Naive thymus-derived CD4-positive, alpha-beta T cell (primary cell): ENCODE measurements at regions of chr1 and their contacts with region 1.

Region 1: DNA sequence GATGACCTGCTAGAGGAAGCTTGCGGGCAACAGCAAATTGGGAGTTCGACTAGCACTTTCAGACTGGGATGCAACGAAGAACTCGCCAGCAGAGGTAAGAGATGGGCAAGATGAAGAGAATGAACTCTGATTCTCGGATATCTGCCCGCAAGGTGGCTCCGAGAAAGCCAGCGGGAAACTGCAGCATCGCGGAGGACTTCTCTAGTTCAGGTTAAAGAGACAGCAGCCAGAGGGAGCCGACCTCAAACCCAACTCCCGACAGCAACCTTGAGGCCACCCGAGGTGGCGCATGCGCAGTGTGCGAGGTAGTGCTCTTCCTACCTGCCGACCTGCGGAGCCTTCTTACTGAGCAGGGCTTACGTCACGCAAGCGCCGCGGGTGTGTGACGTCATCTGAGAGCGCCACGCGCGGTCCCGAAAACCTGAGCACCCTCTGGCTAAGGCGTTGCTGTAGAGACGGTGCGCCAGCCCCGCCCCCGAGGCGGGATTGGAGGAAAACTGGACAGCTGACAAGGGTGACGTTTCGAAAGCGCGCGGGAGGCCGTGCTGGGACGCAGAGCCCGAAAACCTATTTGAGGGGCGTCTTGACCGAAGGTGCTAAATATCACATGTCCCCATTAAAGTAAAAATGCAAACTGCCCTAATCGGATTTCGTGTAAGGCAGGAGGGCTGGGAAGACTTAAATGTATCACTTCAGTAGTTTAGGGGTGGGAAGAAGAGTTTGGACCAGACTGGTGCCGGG is 110.5 kb upstream of the SLC25A33 start:
- DNase-seq: peak; percentile 96 to 100 (median 99)
- ATAC-seq: peak; percentile 90
- H3K4me3 ChIP-seq: peak overlapping the region; percentile 80
- H3K4me3 Mint-ChIP-seq: peak overlapping the region; percentile 80 to 100 (median 96)
- H3K27ac ChIP-seq: peak overlapping the region; percentile 88
- H3K27ac Mint-ChIP-seq: peak overlapping the region; percentile 92 to 100 (median 98)
- H3K4me1 ChIP-seq: peaks cover 28 to 42% of the 10 kb centered on the region in 2 donors
- H3K4me1 Mint-ChIP-seq: peaks cover 34 to 64% (median 56%) of the 10 kb centered on the region in 7 donors
- H3K27me3 ChIP-seq: no peaks in the 10 kb centered on the region
- H3K27me3 Mint-ChIP-seq: peaks cover 0 to 21% (median 0%) of the 10 kb centered on the region in 5 donors

Region 2: DNA sequence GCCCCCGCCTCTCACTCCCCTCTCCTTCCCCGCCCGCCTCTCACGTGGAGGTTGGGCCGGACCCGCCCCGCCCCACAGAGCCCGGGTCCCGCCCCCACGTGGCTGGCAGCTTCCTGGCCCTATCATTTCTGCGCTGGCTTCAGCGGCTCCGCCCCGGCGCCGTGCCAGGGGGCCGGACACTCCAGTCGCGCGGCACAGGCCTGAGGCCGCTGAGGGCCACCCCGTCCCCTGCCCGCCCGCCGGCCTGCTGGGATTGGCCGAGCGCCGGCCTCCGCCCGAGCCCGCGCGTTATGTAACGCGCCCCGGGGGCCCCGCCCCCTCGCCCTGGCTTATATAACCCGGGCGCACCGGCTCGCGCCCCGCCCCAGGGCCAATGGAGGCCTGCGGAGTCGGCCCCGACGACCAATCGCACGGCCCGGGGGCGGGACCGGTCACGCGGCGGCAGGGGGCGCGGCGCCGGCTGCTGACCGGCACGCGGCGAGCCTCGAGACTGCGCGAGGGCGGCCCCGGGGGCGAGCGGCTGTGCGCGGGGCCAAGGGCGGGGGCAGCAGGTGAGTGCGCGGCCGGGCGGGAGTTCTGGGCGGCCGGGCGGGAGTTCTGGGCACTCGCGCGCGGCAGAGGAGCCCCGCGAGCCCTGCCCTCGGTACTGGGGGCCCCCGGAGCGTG is 1644.8 kb before region 1 on chr1 and contains the start of gene PER3:
- CTCF ChIA-PET with region 1: no interaction called
- POLR2A ChIA-PET with region 1: no interaction called
- intact Hi-C with region 1: loop called in 1 of 2 experiments (anchors 5 kb)
- DNase-seq: peak; percentile 84 to 97 (median 94)
- ATAC-seq: peak; percentile 93
- H3K4me3 ChIP-seq: peak within 1 kb of the TSS; percentile 58
- H3K4me3 Mint-ChIP-seq: peak within 1 kb of the TSS; percentile 67 to 85 (median 76)
- H3K27ac ChIP-seq: peak within 1 kb of the TSS; percentile 99
- H3K27ac Mint-ChIP-seq: peak within 1 kb of the TSS in 8 of 9 donors; percentile 63 to 91 (median 82)
- H3K4me1 ChIP-seq: peaks cover 8 to 17% of the 10 kb centered on the region in 2 donors
- H3K4me1 Mint-ChIP-seq: peaks cover 18 to 39% (median 28%) of the 10 kb centered on the region in 7 donors
- H3K27me3 ChIP-seq: no peaks in the 10 kb centered on the region
- H3K27me3 Mint-ChIP-seq: peaks cover 0 to 16% (median 0%) of the 10 kb centered on the region in 5 donors
- total RNA-seq, gene PER3: 2.2 to 10.4 (median 5.1) TPM

Region 3: GRCh38 chr1:9234223-9235095 is 194.3 kb before region 1 on chr1 and contains the start of gene H6PD:
- CTCF ChIA-PET with region 1: no interaction called
- POLR2A ChIA-PET with region 1: interaction called, 3 read pairs
- intact Hi-C with region 1: loop called in 1 of 2 experiments (anchors 2 kb)
- DNase-seq: peak; percentile 60 to 88 (median 74)
- ATAC-seq: peak; percentile 88
- H3K4me3 ChIP-seq: peak within 1 kb of the TSS; percentile 74
- H3K4me3 Mint-ChIP-seq: peak within 1 kb of the TSS; percentile 83 to 97 (median 96)
- H3K27ac ChIP-seq: peak within 1 kb of the TSS; percentile 86
- H3K27ac Mint-ChIP-seq: peak within 1 kb of the TSS; percentile 91 to 99 (median 98)
- H3K4me1 ChIP-seq: peaks cover 14 to 23% of the 10 kb centered on the region in 2 donors
- H3K4me1 Mint-ChIP-seq: peaks cover 19 to 44% (median 36%) of the 10 kb centered on the region in 7 donors
- H3K27me3 ChIP-seq: no peaks in the 10 kb centered on the region
- H3K27me3 Mint-ChIP-seq: no peaks in the 10 kb centered on the region
- total RNA-seq, gene H6PD: 18.6 to 27.6 (median 19.8) TPM

Region 4: GRCh38 chr1:9292361-9293240 is 136.2 kb before region 1 on chr1 and contains the start of gene SPSB1:
- CTCF ChIA-PET with region 1: no interaction called
- POLR2A ChIA-PET with region 1: interaction called, 4 read pairs
- intact Hi-C with region 1: loop called (anchors 1 kb)
- DNase-seq: peak; percentile 30 to 66 (median 56)
- ATAC-seq: peak; percentile 81
- H3K4me3 ChIP-seq: peak within 1 kb of the TSS; percentile 55
- H3K4me3 Mint-ChIP-seq: peak within 1 kb of the TSS; percentile 34 to 86 (median 66)
- H3K27ac ChIP-seq: peak within 1 kb of the TSS; percentile 27
- H3K27ac Mint-ChIP-seq: peak within 1 kb of the TSS in 8 of 9 donors; percentile 21 to 81 (median 52)
- H3K4me1 ChIP-seq: peaks cover 6 to 19% of the 10 kb centered on the region in 2 donors
- H3K4me1 Mint-ChIP-seq: peaks cover 6 to 40% (median 32%) of the 10 kb centered on the region in 7 donors
- H3K27me3 ChIP-seq: no peaks in the 10 kb centered on the region
- H3K27me3 Mint-ChIP-seq: no peaks in the 10 kb centered on the region
- total RNA-seq, gene SPSB1: 1.8 to 10.3 (median 1.9) TPM

Region 5: GRCh38 chr1:9331558-9332346 is 97.0 kb before region 1 on chr1:
- CTCF ChIA-PET with region 1: no interaction called
- POLR2A ChIA-PET with region 1: no interaction called
- intact Hi-C with region 1: no loop called
- DNase-seq: no peak
- ATAC-seq: no peak
- H3K4me3 ChIP-seq: no peak overlapping the region
- H3K4me3 Mint-ChIP-seq: no peak overlapping the region
- H3K27ac ChIP-seq: no peak overlapping the region
- H3K27ac Mint-ChIP-seq: peak overlapping the region in 2 of 9 donors; percentile 63 to 64
- H3K4me1 ChIP-seq: no peaks in the 10 kb centered on the region
- H3K4me1 Mint-ChIP-seq: peaks cover 11 to 24% (median 14%) of the 10 kb centered on the region in 7 donors
- H3K27me3 ChIP-seq: no peaks in the 10 kb centered on the region
- H3K27me3 Mint-ChIP-seq: no peaks in the 10 kb centered on the region

Region 6: GRCh38 chr1:9399510-9400424 is 29.0 kb before region 1 on chr1:
- CTCF ChIA-PET with region 1: no interaction called
- POLR2A ChIA-PET with region 1: interaction called, 12 read pairs
- intact Hi-C with region 1: loop called in 1 of 2 experiments (anchors 1 kb)
- DNase-seq: no peak
- ATAC-seq: no peak
- H3K4me3 ChIP-seq: no peak overlapping the region
- H3K4me3 Mint-ChIP-seq: peak overlapping the region in 7 of 10 donors; percentile 21 to 69 (median 40)
- H3K27ac ChIP-seq: no peak overlapping the region
- H3K27ac Mint-ChIP-seq: peak overlapping the region in 1 of 9 donors; percentile 53
- H3K4me1 ChIP-seq: peaks cover 0 to 15% of the 10 kb centered on the region in 2 donors
- H3K4me1 Mint-ChIP-seq: peaks cover 2 to 17% (median 14%) of the 10 kb centered on the region in 7 donors
- H3K27me3 ChIP-seq: no peaks in the 10 kb centered on the region
- H3K27me3 Mint-ChIP-seq: peaks cover 0 to 14% (median 0%) of the 10 kb centered on the region in 5 donors

Region 7: DNA sequence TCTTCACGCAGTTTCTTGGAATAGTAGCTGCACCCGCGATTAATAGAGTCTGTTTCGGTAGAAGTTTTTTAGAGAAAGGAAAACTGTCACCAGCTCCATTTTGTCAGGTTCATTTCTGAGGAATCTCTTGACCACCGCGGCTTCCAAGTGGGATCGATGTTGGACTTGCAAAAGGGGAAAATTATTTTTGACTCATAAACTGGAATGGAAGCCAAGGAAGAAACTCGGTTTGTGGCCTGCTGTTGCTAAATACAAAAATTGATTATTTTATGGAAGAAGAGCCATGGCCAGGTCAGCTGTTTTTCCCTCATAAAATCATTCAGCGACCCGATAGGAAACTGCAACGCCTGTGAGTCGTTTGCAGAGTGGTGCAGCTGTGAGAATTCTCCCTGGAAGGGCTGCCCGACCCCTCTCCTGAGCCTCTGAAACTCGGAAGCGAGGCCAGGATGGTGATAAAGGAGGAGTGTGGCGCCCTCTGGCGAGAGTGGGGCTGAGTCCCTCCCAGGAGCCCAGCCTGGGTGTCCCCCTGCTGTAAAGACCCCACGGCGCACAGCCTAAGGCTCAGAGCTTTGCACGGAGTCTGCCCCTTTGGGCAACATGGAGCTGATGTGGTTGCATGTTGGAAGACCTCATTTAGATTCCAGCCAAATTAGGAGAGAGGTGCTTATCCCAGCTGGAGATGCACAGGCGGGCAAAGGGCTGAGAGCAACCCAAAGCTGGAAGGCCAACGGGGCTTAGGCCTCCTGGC is 26.9 kb after region 1 on chr1:
- CTCF ChIA-PET with region 1: no interaction called
- POLR2A ChIA-PET with region 1: no interaction called
- intact Hi-C with region 1: loop called in 1 of 2 experiments (anchors 1 kb)
- DNase-seq: peak; percentile 26 to 70 (median 58)
- ATAC-seq: peak; percentile 76
- H3K4me3 ChIP-seq: no peak overlapping the region
- H3K4me3 Mint-ChIP-seq: no peak overlapping the region
- H3K27ac ChIP-seq: no peak overlapping the region
- H3K27ac Mint-ChIP-seq: peak overlapping the region in 1 of 9 donors; percentile 48
- H3K4me1 ChIP-seq: no peaks in the 10 kb centered on the region
- H3K4me1 Mint-ChIP-seq: no peaks in the 10 kb centered on the region
- H3K27me3 ChIP-seq: no peaks in the 10 kb centered on the region
- H3K27me3 Mint-ChIP-seq: peaks cover 0 to 22% (median 0%) of the 10 kb centered on the region in 5 donors

Region 8: GRCh38 chr1:9473032-9473792 is 44.4 kb after region 1 on chr1:
- CTCF ChIA-PET with region 1: no interaction called
- POLR2A ChIA-PET with region 1: no interaction called
- intact Hi-C with region 1: no loop called
- DNase-seq: no peak
- ATAC-seq: no peak
- H3K4me3 ChIP-seq: no peak overlapping the region
- H3K4me3 Mint-ChIP-seq: no peak overlapping the region
- H3K27ac ChIP-seq: no peak overlapping the region
- H3K27ac Mint-ChIP-seq: no peak overlapping the region
- H3K4me1 ChIP-seq: no peaks in the 10 kb centered on the region
- H3K4me1 Mint-ChIP-seq: no peaks in the 10 kb centered on the region
- H3K27me3 ChIP-seq: no peaks in the 10 kb centered on the region
- H3K27me3 Mint-ChIP-seq: peaks cover 3 to 22% (median 10%) of the 10 kb centered on the region in 5 donors

Region 9: DNA sequence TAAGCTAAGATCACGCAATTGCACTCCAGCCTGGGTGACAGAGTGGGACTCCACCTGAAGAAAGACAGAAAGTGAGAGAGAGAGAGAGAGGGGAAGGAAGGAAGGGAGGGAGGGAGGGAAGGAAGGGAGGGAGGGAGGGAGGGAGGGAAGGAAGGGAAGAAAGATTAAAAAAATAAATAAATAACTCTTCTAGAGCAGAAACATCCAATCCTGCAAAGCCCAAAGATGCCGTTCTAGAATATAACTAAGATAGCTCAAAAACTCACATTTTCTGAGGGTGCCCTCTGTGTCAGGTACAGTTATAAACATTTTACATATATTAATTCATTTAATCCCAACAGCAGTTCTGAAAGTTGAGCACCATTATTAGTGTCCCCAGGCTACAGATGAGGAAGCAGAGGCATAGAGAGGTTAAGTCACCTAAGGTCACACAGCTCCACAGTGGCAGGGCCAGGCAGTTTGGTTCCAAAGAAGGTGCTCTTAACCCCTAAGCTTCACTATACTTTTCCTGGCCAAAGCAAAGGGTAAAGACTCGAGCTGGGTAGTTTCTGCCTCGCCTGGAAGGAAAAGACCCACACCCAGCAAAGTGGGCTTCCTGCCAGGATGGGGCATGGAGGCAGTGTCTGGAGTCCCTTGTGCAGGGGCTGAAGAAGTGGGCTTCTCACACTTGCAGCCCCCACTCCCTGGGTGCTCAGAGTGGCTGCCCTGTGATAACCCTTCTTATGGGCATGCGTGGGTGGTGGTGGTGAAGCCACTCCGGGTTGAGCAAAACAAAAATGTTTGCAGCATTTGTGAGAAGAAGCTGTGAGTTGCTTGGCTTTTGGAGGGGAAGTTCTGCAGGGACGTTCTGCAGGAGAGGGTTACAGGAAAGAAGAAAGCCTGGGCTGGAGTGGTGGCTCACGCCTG is 214.8 kb after region 1 on chr1:
- CTCF ChIA-PET with region 1: no interaction called
- POLR2A ChIA-PET with region 1: no interaction called
- intact Hi-C with region 1: no loop called
- DNase-seq: peak in 3 of 9 donors; percentile 10 to 55 (median 33)
- ATAC-seq: peak; percentile 43
- H3K4me3 ChIP-seq: no peak overlapping the region
- H3K4me3 Mint-ChIP-seq: peak overlapping the region; percentile 56 to 86 (median 76)
- H3K27ac ChIP-seq: peak overlapping the region; percentile 55
- H3K27ac Mint-ChIP-seq: peak overlapping the region; percentile 80 to 94 (median 90)
- H3K4me1 ChIP-seq: peaks cover 18 to 66% of the 10 kb centered on the region in 2 donors
- H3K4me1 Mint-ChIP-seq: peaks cover 46 to 83% (median 76%) of the 10 kb centered on the region in 7 donors
- H3K27me3 ChIP-seq: no peaks in the 10 kb centered on the region
- H3K27me3 Mint-ChIP-seq: no peaks in the 10 kb centered on the region

Region 10: DNA sequence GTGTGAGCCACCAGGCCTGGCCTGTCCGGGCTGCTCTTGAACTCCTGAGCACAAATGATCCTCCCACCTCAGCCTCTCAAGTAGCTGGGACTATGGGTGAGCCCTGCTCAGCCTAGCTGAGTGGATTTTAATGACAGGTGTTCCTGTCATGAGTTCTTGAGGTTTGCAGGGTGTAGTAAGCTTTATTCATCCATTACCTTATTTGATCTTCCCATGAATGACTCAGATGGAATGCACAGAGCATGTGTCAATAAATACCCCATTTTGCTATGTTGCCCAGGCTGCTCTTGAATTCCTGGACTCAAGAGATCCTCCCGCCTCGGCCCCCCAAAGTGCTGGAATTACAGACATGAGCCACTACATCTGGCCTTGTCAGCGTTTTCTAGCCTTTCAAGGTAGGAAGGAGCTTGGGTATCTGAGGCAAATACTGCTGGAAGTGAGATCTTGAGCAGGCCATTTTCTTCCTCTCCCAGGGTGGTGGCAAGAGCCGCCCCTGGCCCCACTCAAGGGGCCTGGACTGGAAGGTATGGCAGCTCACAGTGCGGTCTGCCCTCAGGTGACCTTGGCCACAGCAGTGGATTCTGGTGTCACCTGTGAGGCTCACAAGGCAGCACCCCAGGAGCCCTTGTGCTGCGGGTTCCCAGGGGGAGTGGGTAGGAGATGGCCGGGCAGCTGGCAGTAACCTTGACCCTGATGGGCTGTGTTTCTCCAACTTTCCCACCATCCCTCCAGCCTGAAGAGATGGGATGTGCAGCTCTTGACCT is 242.8 kb after region 1 on chr1:
- CTCF ChIA-PET with region 1: no interaction called
- POLR2A ChIA-PET with region 1: no interaction called
- intact Hi-C with region 1: no loop called
- DNase-seq: no peak
- ATAC-seq: no peak
- H3K4me3 ChIP-seq: no peak overlapping the region
- H3K4me3 Mint-ChIP-seq: peak overlapping the region in 6 of 10 donors; percentile 29 to 48 (median 38)
- H3K27ac ChIP-seq: peak overlapping the region; percentile 34
- H3K27ac Mint-ChIP-seq: peak overlapping the region; percentile 2 to 87 (median 60)
- H3K4me1 ChIP-seq: peaks cover 28 to 34% of the 10 kb centered on the region in 2 donors
- H3K4me1 Mint-ChIP-seq: peaks cover 42 to 81% (median 71%) of the 10 kb centered on the region in 7 donors
- H3K27me3 ChIP-seq: no peaks in the 10 kb centered on the region
- H3K27me3 Mint-ChIP-seq: no peaks in the 10 kb centered on the region

Region 11: DNA sequence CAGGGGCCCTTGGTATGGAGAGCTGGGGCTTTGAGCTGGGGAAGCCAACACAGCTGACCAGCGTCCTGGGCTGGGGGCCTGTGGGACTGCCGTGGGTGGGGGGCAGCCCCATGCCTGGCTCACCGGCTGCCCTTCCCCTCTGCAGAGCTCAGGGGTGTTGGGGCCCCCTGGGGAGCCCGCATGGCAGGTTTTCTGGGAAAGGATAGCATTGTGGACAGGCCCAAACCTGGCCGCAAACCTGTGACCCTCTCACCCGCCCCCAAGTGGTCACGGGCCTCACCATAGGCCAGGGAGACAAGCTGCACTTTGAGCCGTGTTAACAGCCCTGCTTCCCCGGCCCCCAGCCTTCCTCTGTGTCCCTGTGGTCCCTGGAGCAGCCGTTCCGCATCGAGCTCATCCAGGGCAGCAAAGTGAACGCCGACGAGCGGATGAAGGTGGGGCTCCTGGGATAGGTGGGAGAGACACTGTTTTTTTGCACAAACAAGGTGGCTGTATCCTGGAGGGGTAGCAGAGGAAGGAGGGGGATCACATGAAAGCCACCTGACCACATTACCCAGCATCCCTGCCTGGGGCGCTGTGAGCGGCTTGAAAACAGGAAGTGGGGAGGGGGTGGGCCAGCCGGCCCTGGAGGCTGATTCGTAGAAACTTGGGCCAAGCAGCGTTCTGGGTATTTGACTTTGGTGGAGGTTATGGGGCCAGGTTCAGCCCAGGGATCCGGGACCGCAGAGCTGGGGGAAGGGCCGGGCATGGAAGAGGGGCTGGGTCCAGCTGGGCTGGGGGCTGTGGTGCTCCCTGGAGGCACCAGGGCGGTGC is 288.6 kb after region 1 on chr1:
- CTCF ChIA-PET with region 1: no interaction called
- POLR2A ChIA-PET with region 1: no interaction called
- intact Hi-C with region 1: loop called in 1 of 2 experiments (anchors 5 kb)
- DNase-seq: peak; percentile 63 to 95 (median 94)
- ATAC-seq: peak; percentile 90
- H3K4me3 ChIP-seq: peak overlapping the region; percentile 76
- H3K4me3 Mint-ChIP-seq: peak overlapping the region; percentile 80 to 98 (median 94)
- H3K27ac ChIP-seq: peak overlapping the region; percentile 63
- H3K27ac Mint-ChIP-seq: peak overlapping the region; percentile 90 to 99 (median 95)
- H3K4me1 ChIP-seq: peaks cover 60 to 87% of the 10 kb centered on the region in 2 donors
- H3K4me1 Mint-ChIP-seq: peaks cover 26 to 82% (median 66%) of the 10 kb centered on the region in 7 donors
- H3K27me3 ChIP-seq: no peaks in the 10 kb centered on the region
- H3K27me3 Mint-ChIP-seq: no peaks in the 10 kb centered on the region